ENCODE measurements at regions of chr22 and their contacts with region 1.

Region 1: DNA sequence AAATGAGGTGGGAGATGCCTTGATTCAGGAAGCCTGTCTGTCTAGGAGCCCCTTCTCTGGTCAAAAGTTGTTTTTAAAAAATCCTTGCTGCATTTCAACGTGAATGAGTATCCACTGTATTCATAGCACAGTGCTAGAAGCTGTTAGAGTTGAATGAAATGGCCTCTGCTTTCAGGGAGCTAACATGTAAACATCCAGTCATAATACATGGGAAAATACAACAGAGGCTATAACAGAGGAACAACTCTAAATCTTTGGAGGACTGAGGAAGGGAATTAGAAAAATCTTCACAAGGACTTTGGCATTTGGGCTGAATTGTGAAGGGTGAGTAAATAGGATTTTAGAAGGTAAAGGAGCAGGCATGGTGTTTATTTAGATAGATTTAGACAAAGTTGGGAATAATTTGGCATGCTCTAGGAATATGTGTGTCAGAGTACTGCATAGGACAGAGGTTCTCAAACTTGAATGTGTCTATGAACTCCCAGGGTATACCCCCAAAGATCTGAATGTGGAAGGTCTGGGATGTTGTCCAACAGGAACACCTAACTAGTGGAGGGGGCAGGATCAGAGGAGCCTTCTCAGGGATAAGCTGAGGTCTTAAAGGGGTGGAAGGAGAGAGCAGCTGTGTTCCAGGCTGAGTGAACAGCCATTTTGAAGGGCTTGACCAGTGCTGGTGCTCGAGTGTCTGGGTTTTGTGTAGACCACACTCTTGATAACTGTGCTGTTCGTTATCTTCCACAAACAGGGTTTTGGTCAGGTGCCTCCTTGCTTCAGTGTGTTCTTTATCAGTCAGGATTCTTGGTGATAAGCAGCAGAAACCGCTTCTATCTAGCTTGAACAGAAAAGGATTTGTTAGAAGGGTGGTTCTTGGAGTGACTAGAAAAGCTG is 12.7 kb downstream of the SREBF2 start:
- DNase-seq: no peak
- ATAC-seq: peak in 2 of 4 donors; percentile 12 to 16
- H3K4me3 ChIP-seq: no peak overlapping the region
- H3K27ac ChIP-seq: no peak overlapping the region
- H3K4me1 ChIP-seq: peaks cover 0 to 61% (median 41%) of the 10 kb centered on the region in 12 donors
- H3K27me3 ChIP-seq: no peaks in the 10 kb centered on the region
- CTCF ChIP-seq: no peak
- POLR2A ChIP-seq: no peak

Region 2: DNA sequence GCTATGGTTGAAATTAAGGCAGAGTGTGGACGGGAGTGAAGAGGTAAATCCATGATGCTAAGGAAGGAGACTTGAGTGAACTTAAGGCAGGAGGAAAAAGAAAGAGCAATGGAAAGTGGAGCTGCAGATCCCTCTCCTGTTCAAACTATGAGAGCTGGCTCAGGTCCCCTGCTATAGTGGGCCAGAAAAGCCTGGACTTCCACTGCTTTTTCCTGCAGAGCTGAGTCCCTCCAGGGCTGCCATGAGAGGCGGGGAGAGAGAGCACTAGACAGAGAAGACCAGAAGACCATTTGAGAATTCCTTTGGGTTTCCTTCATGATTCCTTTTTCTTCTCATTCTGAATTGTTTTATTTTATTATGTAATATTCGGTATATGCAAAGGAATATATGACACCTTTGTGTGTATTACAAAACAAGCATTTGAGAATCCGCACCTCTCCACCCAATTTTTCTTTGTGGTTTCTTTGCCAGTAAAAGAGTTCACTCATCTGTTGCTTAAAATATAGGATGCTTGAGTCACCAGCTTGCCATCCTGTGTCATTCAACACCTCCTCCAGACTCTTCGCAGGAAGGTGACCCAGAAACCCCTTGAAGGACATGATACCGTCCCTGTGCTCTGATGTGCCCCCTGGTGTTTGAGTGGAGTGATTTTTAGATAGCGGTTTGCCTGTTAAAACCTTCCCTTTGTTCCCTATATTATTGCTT is 11.7 kb after region 1 on chr22:
- intact Hi-C with region 1: loop called in 1 of 10 experiments (anchors 1 kb)
- DNase-seq: peak in 3 of 5 donors; percentile 23 to 45 (median 40)
- ATAC-seq: peak in 3 of 4 donors; percentile 64 to 77 (median 74)
- H3K4me3 ChIP-seq: no peak overlapping the region
- H3K27ac ChIP-seq: peak overlapping the region in 6 of 12 donors; percentile 10 to 48 (median 22)
- H3K4me1 ChIP-seq: peaks cover 0 to 35% (median 18%) of the 10 kb centered on the region in 12 donors
- H3K27me3 ChIP-seq: no peaks in the 10 kb centered on the region
- CTCF ChIP-seq: peak; percentile 21 to 60 (median 51)
- POLR2A ChIP-seq: no peak